K562 (cell line): ENCODE measurements at regions of chr5 and their contacts with region 1.

Region 1: GRCh38 chr5:154818471-154819116 is 31.8 kb downstream of the FAXDC2 start:
- DNase-seq: peak; percentile 42 to 59 (median 50)
- ATAC-seq: peak; percentile 61
- H3K4me3 ChIP-seq: no peak overlapping the region
- H3K27ac ChIP-seq: peak overlapping the region; percentile 34
- H3K4me1 ChIP-seq: peaks cover 19 to 26% of the 10 kb centered on the region in 2 experiments
- H3K27me3 ChIP-seq: no peaks in the 10 kb centered on the region
- CTCF ChIP-seq: no peak
- EP300 ChIP-seq: no peak; the same call in 1 of the 2 replicates
- POLR2A ChIP-seq: 0 out of 2 replicates have a peak, but pooled peaks have one; percentile 42
- RAD21 ChIP-seq: no peak

Region 2: DNA sequence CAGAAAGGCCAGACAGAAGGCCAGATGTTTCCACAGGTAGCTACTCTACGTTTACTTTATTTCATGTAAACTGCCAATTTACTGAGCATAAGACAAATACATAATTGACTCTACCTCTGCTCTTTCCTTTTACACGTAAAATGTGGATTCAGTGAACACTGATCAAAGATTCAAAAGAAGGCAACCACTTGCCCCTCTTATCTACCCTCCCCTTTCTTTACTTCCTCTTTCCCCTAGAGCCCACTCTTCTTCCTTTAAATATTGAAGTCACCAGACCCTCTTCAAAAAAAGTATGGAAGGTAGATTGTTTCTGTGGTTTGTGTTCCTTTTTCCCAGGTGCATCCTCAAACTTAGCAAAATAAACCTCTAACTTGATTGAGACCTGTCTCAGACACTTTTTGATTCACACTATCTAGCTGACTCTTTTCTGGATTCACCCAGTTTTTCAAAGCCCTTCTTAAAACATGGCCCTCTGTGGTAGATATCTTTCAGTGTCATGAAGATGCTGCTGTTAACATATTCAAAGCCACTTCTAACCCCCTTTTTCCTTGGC is 786.6 kb before region 1 on chr5:
- CTCF ChIA-PET with region 1: no interaction called
- POLR2A ChIA-PET with region 1: no interaction called
- in situ Hi-C with region 1: no loop called
- intact Hi-C with region 1: no loop called
- DNase-seq: no peak
- ATAC-seq: peak; percentile 51; the same call in 2 of the 3 replicates
- H3K4me3 ChIP-seq: no peak overlapping the region
- H3K27ac ChIP-seq: no peak overlapping the region
- H3K4me1 ChIP-seq: peaks cover 0 to 10% of the 10 kb centered on the region in 2 experiments; a peak in 3 of 5 replicates
- H3K27me3 ChIP-seq: no peaks in the 10 kb centered on the region
- CTCF ChIP-seq: no peak
- EP300 ChIP-seq: no peak
- POLR2A ChIP-seq: no peak
- RAD21 ChIP-seq: no peak

Region 3: GRCh38 chr5:154421868-154422267 is 396.7 kb before region 1 on chr5:
- CTCF ChIA-PET with region 1: no interaction called
- POLR2A ChIA-PET with region 1: no interaction called
- in situ Hi-C with region 1: no loop called
- intact Hi-C with region 1: no loop called
- DNase-seq: peak; percentile 45 to 66 (median 56)
- ATAC-seq: peak; percentile 94
- H3K4me3 ChIP-seq: no peak overlapping the region
- H3K27ac ChIP-seq: no peak overlapping the region
- H3K4me1 ChIP-seq: peaks cover 0 to 8% of the 10 kb centered on the region in 2 experiments; a peak in 2 of 5 replicates
- H3K27me3 ChIP-seq: no peaks in the 10 kb centered on the region
- CTCF ChIP-seq: peak; percentile 67 to 80 (median 73)
- EP300 ChIP-seq: no peak
- POLR2A ChIP-seq: no peak
- RAD21 ChIP-seq: peak; percentile 21 to 64; a peak in 2 of 4 replicates

Region 4: DNA sequence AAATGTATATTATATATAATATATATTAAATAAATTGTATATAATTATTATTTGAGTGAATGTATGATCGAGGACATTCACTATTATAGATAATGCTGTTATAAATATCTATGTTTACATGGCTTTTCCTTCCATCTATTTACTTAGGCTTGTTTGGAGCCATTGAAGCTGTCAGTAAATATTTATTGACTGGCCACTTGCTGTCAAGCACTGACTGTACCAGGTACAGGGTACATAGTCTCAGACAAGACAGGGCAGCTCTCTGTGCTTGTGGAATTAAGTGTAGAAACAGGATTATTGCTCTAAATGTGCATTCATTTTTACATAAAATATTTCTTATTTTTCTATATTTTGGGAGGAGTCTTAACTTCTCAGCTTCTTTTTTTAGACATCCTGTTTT is 15.5 kb after region 1 on chr5:
- CTCF ChIA-PET with region 1: no interaction called
- POLR2A ChIA-PET with region 1: interaction called, 4 read pairs
- in situ Hi-C with region 1: no loop called
- intact Hi-C with region 1: loop called (anchors 2 kb)
- DNase-seq: no peak
- ATAC-seq: no peak
- H3K4me3 ChIP-seq: peak overlapping the region; percentile 30; the same call in 1 of the 2 replicates
- H3K27ac ChIP-seq: peak overlapping the region; percentile 73
- H3K4me1 ChIP-seq: peaks cover 24 to 26% of the 10 kb centered on the region in 2 experiments
- H3K27me3 ChIP-seq: no peaks in the 10 kb centered on the region
- CTCF ChIP-seq: no peak
- EP300 ChIP-seq: no peak
- POLR2A ChIP-seq: no peak
- RAD21 ChIP-seq: no peak

Region 5: GRCh38 chr5:154857530-154858296 is 39.1 kb after region 1 on chr5:
- CTCF ChIA-PET with region 1: no interaction called
- POLR2A ChIA-PET with region 1: interaction called, 5 read pairs
- in situ Hi-C with region 1: no loop called
- intact Hi-C with region 1: loop called (anchors 2 kb)
- DNase-seq: peak; percentile 82 to 95 (median 87)
- ATAC-seq: peak; percentile 86
- H3K4me3 ChIP-seq: peak overlapping the region; percentile 88
- H3K27ac ChIP-seq: peak overlapping the region; percentile 95
- H3K4me1 ChIP-seq: peaks cover 17 to 31% of the 10 kb centered on the region in 2 experiments; a peak in 4 of 5 replicates
- H3K27me3 ChIP-seq: no peaks in the 10 kb centered on the region
- CTCF ChIP-seq: peak in 1 of 3 experiments; percentile 14; a peak in 1 of 6 replicates
- EP300 ChIP-seq: no peak
- POLR2A ChIP-seq: peak; percentile 1
- RAD21 ChIP-seq: no peak

Region 6: DNA sequence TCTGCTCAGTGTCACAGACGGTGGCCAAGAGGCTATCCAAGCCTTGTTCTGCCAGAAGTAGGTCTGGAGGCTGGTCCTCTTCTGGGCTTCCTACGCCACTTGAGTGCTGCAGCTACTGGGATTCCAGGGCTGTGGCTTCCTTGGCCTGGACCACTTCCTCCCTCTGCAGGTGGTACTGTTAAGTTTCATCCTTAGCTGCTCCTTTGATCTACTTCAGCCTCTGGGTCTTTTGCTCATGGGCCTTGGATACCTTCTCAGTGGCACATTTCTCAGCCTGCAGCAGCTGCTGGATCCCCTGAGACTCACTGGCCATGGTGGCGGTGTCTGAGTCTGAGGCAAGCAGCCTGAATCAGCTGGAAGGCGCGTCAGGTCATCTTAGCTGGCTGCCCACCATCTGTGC is 50.1 kb after region 1 on chr5:
- CTCF ChIA-PET with region 1: no interaction called
- POLR2A ChIA-PET with region 1: no interaction called
- in situ Hi-C with region 1: no loop called
- intact Hi-C with region 1: loop called (anchors 2 kb)
- DNase-seq: peak in 3 of 4 experiments; percentile 22 to 55 (median 49)
- ATAC-seq: peak; percentile 89
- H3K4me3 ChIP-seq: no peak overlapping the region
- H3K27ac ChIP-seq: no peak overlapping the region
- H3K4me1 ChIP-seq: no peaks in the 10 kb centered on the region
- H3K27me3 ChIP-seq: no peaks in the 10 kb centered on the region
- CTCF ChIP-seq: peak; percentile 54 to 73 (median 60)
- EP300 ChIP-seq: no peak
- POLR2A ChIP-seq: no peak
- RAD21 ChIP-seq: peak; percentile 40 to 70